ENCODE measurements at regions of chr11 and their contacts with region 1.

Region 1: GRCh38 chr11:86431258-86431657 is 56.6 kb downstream of the CCDC81 start:
- DNase-seq: no peak
- H3K4me3 ChIP-seq: no peak overlapping the region
- CTCF ChIP-seq: no peak

Region 2: GRCh38 chr11:86370922-86371594 is 60.2 kb before region 1 on chr11:
- CTCF ChIA-PET with region 1: no interaction called
- POLR2A ChIA-PET with region 1: no interaction called
- DNase-seq: peak; percentile 7
- H3K4me3 ChIP-seq: no peak overlapping the region
- CTCF ChIP-seq: no peak

Region 3: DNA sequence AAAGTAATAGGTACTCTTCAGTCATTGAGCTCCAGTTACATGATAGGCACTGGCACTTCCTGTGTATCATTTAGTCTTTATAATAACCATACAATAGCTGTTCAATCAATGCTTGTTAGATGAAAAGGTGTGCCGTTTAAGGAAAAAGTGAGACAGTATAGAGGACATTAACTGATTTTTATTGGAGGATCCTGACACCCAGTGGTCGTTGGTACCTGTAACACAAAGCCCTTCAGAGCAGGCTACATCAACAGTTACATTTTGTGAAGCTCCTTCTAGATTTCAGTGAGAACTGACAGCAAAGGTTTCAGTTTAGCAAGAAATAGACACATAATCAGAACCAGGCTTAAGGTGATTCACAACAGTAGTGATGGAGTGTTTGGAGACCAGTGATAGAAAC is 12.3 kb before region 1 on chr11:
- CTCF ChIA-PET with region 1: interaction called, 11 read pairs
- POLR2A ChIA-PET with region 1: no interaction called
- DNase-seq: no peak
- H3K4me3 ChIP-seq: no peak overlapping the region
- CTCF ChIP-seq: peak; percentile 32

Region 4: DNA sequence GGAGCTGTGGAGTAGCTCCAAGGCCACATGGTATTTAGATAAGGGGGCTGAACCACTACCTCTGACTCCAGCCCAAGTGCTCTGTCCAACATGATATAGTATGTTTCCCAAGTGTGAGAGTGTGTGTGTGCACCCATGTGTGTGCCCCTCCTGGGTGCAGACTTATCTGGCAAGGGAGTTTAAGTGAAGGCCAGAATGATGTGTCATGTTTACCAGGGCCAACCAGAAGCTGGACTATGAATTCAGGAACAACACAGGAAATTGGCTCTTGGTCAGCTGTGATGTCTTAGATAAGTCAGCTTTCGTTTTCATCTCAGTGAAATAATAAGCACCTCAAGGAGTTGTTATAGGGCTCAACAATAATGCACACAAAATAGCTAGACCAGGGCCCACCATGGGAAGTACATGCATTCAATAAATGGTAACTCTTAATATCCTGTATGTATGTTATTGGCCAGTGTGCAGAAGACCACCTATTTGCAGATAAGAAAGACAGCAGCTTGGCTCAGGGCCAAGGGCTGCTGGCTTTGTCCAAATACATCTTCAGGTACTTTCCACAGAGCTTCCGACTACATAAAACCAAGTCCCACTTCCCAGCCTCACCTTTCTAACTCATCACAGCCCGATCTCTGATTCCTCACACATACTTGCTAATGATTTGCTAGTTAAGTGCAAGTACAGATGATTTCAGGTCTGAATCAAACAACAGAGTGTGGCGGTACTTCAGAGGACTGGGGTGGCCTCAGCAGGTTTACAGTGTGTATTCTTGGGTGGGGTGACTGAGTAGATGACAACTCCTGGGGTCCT is 120.2 kb after region 1 on chr11:
- CTCF ChIA-PET with region 1: no interaction called
- POLR2A ChIA-PET with region 1: no interaction called
- DNase-seq: peak; percentile 82
- H3K4me3 ChIP-seq: no peak overlapping the region
- CTCF ChIP-seq: no peak

Measured in AG04449 (cell line).